ENCODE measurements at regions of chr9 and their contacts with region 1.

Region 1: DNA sequence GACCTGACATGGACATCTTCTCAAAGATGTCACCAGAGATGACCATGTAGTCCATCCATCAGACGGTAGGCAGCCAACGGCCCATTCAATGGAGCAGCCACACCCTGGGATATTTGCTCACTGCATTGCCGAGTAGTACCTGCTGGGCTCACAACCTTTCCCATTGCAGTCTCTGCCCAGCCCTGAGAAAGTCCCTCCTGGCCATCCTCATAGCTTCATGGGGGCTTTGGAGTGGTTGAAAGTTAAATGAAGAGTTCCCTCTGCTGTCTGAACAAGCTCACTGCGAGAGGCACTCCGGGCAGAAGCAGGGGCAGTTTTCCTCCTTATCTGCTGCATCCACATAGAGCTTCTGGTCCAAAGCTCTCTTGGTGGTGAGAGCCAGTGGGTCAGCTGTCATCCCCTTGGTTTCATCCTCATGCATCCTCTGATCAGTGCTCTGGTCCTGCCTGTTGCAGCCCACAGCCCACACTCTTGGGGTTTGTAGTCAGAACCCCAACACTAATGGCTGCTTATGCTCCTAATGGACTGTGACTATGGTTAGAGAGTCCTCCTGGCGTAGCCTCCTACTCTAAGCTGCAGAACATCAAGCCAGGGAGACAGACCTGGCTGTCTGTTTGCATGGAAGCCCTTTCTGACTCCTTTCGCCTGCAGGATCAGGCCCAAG is 23.4 kb downstream of the TNFSF8 start:
- DNase-seq: peak; percentile 50
- H3K4me3 Mint-ChIP-seq: no peak overlapping the region
- H3K27ac Mint-ChIP-seq: no peak overlapping the region
- H3K4me1 Mint-ChIP-seq: peaks cover 51% of the 10 kb centered on the region
- H3K27me3 Mint-ChIP-seq: no peaks in the 10 kb centered on the region
- CTCF ChIP-seq: peak; percentile 49

Region 2: DNA sequence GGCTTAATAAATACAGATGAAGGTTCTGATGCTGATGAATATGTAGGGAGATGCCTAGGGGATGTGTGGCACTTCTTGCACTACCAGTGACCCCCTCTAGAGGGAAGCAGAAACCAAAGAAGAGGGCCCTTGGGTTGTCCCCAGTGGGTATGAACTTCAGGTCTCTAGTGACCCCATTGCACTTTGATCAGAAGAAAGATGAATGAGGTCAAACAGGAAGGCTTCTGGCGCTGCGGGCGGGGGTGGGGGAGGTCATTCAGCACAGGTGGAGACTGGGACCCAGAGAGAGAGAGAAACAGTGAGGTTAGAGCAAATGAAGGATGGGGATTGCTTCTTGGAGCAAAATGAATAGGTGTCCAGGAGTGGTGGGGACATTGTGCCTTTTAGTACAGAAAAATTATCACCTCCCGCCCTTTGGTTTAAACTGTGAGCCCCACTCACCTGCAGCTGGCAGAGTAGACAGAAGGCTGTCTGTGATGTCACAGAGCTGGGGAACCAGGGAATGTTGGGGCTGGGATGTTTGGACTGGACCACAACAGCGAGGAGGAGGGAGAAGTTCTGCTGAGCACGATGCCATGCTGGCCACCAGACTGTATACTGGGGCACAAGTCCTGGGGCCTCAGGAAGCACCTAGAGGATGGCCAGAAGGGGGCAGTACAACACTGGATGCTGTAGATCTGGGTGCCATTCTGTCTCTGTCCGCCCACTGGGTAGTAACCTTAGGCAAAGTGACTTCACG is 225.3 kb before region 1 on chr9 and contains the start of gene TEX48:
- CTCF ChIA-PET with region 1: interaction called, 250 read pairs
- POLR2A ChIA-PET with region 1: interaction called, 8 read pairs
- intact Hi-C with region 1: loop called (anchors 1 kb)
- DNase-seq: peak; percentile 90
- H3K4me3 Mint-ChIP-seq: no peak within 1 kb of the TSS
- H3K27ac Mint-ChIP-seq: no peak within 1 kb of the TSS
- H3K4me1 Mint-ChIP-seq: peaks cover 32% of the 10 kb centered on the region
- H3K27me3 Mint-ChIP-seq: no peaks in the 10 kb centered on the region
- CTCF ChIP-seq: peak; percentile 84
- total RNA-seq, gene TEX48: not detected in 2 replicates

Region 3: DNA sequence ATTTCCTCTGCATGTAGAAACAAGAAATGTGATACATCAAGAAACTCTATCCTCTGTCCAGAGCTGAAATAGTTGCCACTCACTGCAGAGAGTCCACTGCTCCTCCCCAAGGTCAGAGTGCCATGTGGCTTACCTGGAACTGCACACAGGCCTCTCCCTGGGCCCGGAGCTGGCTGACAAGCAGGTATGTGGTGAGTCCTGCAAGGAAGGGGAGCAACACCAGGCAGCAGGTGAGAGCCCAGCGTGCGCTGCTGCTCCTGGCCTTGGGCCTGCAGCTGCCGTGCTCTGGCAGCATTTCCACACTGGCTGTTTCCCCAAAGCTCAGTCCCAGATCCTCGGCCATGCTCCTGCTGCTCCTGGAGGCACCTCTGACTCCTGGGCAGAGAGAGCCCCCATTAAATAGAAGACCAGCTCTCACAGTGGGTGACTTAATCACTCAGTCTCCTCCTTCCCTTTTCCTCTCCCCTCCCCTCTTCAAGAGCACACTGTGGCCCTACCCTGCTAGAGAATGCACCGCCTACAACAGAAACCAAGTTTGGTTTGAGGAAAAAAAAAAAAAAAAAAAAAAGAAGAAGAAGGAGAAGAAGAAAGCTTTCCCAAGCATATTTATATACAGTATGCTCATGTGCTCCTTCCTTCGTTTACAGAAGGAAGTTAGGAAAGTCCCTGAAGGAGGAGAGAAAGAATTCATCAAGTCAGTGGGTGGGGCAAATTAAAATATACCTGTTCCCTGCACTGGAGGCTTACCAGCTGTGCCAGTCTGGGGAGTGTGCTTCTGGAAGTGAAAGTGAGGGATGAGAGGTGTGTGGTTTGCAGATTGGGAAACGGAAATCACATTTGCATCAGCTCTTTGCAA is 101.1 kb before region 1 on chr9 and contains the start of gene TNFSF15:
- CTCF ChIA-PET with region 1: interaction called, 16 read pairs
- POLR2A ChIA-PET with region 1: interaction called, 4 read pairs
- intact Hi-C with region 1: no loop called
- DNase-seq: peak; percentile 72
- H3K4me3 Mint-ChIP-seq: peak within 1 kb of the TSS; percentile 62
- H3K27ac Mint-ChIP-seq: peak within 1 kb of the TSS; percentile 77
- H3K4me1 Mint-ChIP-seq: peaks cover 26% of the 10 kb centered on the region
- H3K27me3 Mint-ChIP-seq: no peaks in the 10 kb centered on the region
- CTCF ChIP-seq: no peak
- total RNA-seq, gene TNFSF15: 0.39 and 1.9 TPM in 2 replicates

Region 4: DNA sequence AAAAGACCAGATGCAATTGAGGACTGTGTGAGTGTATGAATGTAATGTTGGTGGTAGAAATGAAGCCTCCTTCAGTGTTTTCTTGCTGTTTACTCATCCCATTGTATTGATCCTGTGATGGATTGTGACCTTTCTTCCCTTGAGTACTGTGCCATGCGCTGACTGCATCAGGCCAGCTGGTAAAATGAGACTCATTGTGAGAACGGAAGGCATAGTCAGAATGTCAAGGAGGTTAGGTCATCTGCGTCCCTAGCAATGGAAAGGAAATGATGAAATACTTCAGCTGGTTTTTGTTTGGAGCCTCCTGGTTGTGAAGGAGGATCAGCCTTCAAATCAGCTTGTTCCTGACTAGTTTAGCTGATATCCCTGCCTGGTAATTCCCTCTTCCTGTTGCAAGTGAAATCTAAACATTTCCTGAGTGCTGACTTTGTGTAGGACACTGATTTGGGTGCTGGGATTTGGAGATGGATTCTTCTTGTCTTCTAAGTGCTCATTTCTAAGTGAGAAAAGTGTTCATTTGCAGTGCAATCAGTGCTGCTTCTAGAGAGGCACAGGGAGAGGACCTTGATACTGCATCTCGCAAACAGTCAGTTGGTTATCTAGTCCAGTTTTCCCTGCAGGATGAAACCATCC is 12.1 kb before region 1 on chr9:
- CTCF ChIA-PET with region 1: interaction called, 25 read pairs
- POLR2A ChIA-PET with region 1: interaction called, 9 read pairs
- intact Hi-C with region 1: loop called (anchors 1 kb)
- DNase-seq: peak; percentile 83
- H3K4me3 Mint-ChIP-seq: no peak overlapping the region
- H3K27ac Mint-ChIP-seq: peak overlapping the region; percentile 16
- H3K4me1 Mint-ChIP-seq: peaks cover 32% of the 10 kb centered on the region
- H3K27me3 Mint-ChIP-seq: no peaks in the 10 kb centered on the region
- CTCF ChIP-seq: no peak

Region 5: DNA sequence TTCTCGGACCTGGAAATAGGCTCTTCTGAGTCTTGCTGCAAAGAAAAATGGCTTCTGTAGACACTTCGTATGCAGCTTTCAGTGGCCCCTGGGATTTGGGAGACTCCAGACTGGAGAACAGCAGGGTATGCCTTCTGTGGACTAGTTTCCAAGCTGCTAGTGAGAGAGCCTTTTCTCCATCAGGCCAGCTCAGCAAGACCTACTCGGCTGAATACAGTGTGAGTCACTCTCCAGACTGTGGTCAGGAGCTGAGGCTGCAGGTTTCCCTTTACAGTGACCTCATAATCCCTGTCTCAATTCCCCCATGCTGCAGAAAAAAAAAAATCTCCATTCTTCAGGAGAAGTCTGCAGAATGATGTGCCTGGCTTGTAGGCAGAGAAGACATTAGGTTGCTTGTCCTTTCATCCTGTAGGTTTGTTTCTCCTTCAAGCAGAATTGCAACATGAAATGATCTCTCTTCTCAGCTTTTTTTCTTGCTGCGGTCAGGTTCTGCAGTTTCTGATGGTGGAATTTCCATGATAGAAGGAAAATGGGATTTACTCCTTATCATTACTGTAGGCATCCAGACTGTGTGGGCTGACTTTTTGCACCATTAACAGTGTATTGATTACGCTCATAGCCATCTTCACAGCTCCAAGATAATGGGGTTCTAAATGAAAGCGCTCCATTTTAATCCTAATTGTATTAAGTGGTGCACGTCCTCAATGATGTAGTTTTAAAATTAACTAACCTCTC is 101.7 kb after region 1 on chr9:
- CTCF ChIA-PET with region 1: interaction called, 28 read pairs
- POLR2A ChIA-PET with region 1: interaction called, 5 read pairs
- intact Hi-C with region 1: no loop called
- DNase-seq: peak; percentile 80
- H3K4me3 Mint-ChIP-seq: no peak overlapping the region
- H3K27ac Mint-ChIP-seq: no peak overlapping the region
- H3K4me1 Mint-ChIP-seq: peaks cover 2% of the 10 kb centered on the region
- H3K27me3 Mint-ChIP-seq: peaks cover 14% of the 10 kb centered on the region
- CTCF ChIP-seq: no peak

Region 6: GRCh38 chr9:115313545-115313944 is 406.5 kb after region 1 on chr9:
- CTCF ChIA-PET with region 1: no interaction called
- POLR2A ChIA-PET with region 1: no interaction called
- intact Hi-C with region 1: no loop called
- DNase-seq: no peak
- H3K4me3 Mint-ChIP-seq: no peak overlapping the region
- H3K27ac Mint-ChIP-seq: no peak overlapping the region
- H3K4me1 Mint-ChIP-seq: no peaks in the 10 kb centered on the region
- H3K27me3 Mint-ChIP-seq: no peaks in the 10 kb centered on the region
- CTCF ChIP-seq: no peak

Region 7: DNA sequence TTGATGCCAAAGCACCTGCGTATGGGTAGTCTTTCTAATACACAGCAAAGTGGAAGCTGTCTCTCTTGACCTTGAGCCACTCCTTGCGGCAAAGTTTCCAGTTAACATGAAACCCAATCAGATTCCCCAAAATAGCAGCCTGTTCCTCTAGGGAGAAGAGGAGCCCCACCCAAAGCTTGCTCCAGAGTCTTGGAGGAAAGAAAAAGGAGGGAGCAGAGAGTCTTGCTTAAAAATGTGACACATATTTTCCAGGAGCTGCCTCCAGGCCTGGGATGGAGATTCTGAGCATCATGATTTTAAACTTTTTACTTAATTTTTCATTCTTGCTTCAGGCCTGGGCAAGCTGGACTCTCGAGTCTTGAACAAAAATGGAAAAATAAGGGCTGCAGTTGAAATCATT is 434.4 kb after region 1 on chr9:
- CTCF ChIA-PET with region 1: no interaction called
- POLR2A ChIA-PET with region 1: no interaction called
- intact Hi-C with region 1: no loop called
- DNase-seq: no peak
- H3K4me3 Mint-ChIP-seq: no peak overlapping the region
- H3K27ac Mint-ChIP-seq: no peak overlapping the region
- H3K4me1 Mint-ChIP-seq: no peaks in the 10 kb centered on the region
- H3K27me3 Mint-ChIP-seq: peaks cover 22% of the 10 kb centered on the region
- CTCF ChIP-seq: no peak